Right cardiac atrium (tissue), 5 donors: ENCODE measurements at regions of chr3 and their contacts with region 1.

Region 1: DNA sequence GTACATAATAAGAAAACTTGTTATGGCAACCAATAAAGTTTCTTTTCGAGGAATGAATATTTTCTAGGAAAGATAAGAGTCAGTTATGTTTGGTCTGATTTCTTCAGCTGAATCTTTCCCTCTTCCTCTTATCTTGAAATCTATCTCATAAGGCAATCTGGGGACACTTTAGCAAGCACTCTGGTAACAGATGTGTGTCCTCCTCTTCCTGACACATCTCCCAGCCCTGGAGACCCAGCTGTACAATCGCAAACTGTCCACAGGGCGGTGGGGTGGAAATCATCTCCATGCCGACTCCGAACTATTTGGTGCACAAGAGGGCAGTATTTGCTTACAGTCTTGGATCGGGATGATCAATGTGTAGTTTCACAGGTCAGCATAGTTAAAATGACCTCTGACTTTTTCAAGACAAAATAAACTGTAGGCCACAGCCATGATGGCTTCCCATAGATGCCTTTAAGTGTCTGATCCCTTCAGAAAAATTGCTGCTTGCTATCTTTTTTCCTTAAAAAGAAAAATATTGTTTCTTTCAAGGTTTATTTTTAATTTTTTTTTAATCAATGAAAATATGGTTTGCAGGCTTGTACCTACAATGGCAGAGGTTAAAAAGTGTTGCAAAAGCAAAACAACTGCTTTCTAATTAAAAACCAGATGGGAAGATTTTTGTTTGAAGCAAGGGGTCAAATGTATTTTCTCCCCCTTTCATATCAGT is 17.7 kb downstream of the EEFSEC start:
- DNase-seq: peak; percentile 61 to 80 (median 72)
- ATAC-seq: peak; percentile 82 to 84
- H3K4me3 ChIP-seq: no peak overlapping the region
- H3K27ac ChIP-seq: no peak overlapping the region
- H3K4me1 ChIP-seq: peaks cover 12% of the 10 kb centered on the region
- H3K27me3 ChIP-seq: no peaks in the 10 kb centered on the region

Region 2: DNA sequence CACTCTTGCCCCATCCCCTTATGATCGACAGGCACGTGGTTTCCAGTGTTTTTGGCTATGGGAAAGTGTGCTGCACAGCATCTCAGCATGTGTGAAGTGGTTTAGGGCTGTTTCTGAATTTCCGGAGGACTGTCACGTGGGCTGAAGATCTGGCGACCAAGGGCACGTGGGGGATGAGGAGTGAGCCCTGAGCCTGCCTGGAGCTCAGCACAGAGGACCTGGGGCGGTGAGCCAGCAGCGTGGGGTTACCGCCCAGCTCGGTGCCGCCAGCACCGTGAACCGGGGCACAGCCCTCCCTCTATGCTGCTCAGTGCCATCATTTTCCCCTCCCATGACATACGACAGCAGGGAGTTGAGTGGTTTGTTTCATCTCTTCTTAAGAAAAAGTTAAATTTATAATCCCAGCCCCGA is 145.5 kb after region 1 on chr3:
- intact Hi-C with region 1: loop called in 2 of 4 experiments (anchors 10 kb)
- DNase-seq: peak; percentile 51 to 73 (median 71)
- ATAC-seq: peak; percentile 39 to 57
- H3K4me3 ChIP-seq: no peak overlapping the region
- H3K27ac ChIP-seq: no peak overlapping the region
- H3K4me1 ChIP-seq: peaks cover 6% of the 10 kb centered on the region
- H3K27me3 ChIP-seq: no peaks in the 10 kb centered on the region

Region 3: GRCh38 chr3:128322066-128323022 is 151.4 kb after region 1 on chr3:
- intact Hi-C with region 1: loop called in 2 of 4 experiments (anchors 10 kb)
- DNase-seq: peak; percentile 53 to 87 (median 84)
- ATAC-seq: peak; percentile 34 to 42
- H3K4me3 ChIP-seq: no peak overlapping the region
- H3K27ac ChIP-seq: no peak overlapping the region
- H3K4me1 ChIP-seq: peaks cover under 1% of the 10 kb centered on the region
- H3K27me3 ChIP-seq: no peaks in the 10 kb centered on the region

Region 4: DNA sequence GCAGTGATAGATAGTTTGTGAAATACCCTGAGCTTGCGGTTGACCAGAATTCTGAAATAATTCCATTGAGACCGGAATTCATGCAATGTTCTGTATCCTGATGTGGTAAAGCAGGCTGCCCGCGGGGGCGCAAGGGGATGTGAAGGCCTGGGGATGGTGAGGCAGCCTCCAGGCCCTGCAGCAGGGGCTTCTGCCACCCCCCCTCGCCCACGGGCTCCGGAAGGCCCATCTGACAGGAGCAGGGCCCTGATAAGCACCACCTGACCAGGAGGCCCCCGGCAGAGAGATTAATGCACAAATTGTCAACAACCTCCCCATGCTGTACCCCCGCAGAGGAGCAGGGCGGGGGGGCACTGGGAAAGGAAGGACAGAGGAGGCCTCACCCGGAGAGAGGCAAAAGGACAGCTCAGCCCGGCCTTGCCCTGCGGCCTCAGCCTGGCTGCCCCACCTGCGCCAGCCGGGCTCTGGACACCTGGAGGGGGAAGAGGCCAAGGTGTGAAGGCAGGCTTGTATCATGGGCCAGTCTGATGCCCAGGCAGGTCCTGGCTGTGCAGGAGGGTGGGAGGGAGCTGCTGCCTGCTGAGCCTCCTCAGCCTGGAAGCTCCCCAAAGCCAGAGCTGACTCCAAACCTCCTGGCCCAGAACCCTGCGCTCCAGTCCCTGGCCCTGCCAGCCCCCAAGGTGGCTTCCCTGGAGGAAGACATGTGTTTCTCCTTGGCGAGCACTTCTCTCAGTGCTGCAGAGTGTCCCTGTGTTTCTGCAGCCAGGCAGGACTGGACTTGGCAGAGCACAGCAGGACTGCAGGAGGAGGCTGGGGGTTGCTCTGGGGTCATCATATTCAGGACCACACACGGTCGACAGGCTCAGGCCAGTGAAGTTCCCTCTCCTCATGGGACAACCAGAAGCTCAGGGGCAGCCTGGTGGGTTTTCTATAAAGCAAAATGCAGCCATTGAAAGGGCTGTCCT is 433.1 kb after region 1 on chr3:
- intact Hi-C with region 1: loop called in 1 of 4 experiments (anchors 5 kb)
- DNase-seq: no peak
- ATAC-seq: no peak
- H3K4me3 ChIP-seq: no peak overlapping the region
- H3K27ac ChIP-seq: no peak overlapping the region
- H3K4me1 ChIP-seq: no peaks in the 10 kb centered on the region
- H3K27me3 ChIP-seq: no peaks in the 10 kb centered on the region